Cardiac septum (tissue), 1 donor: ENCODE measurements at regions of chr16 and their contacts with region 1.

Region 1: DNA sequence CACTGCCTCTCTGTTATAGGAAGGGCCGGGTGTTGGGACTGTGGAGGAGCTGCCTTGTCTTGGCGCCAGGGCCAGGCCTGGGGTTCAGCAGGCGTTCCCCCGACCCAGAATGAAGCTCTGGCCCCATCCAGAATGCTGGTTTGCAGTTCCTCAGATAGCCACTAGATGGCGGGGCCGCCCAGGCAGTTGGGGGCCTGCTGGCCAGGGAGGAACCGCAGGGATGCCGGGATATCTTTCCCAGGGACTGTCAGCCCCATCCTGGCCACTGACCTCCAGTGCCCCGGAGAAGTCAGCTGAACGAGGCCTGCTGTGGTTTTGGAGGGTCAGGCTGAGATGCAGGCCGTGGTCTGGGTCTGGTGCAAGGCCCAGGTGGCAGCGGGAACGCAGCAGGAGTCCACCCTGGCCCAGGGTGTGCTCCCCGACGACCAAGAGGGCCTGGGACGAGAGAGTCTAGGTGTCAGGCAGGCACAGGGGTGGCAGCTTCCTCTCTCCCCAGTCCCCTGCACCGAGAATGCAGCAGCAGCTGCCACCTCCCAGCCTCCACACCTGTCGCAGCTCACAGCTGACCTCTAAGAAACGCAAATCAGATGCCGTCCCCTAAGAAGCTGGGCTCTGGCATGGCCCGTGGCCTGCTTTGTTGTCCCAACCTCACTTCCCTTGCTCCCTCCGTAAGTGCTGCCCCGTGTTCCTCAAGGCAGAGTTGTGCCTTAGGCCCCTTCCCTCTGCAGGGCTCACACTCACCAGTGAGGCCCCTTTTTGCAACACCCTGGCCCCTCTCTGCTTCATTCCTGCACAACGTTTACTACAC is 51.2 kb downstream of the RMI2 start:
- DNase-seq: peak; percentile 87

Region 2: GRCh38 chr16:11345040-11345862 is 51.2 kb before region 1 on chr16 and contains the start of gene RMI2:
- intact Hi-C with region 1: no loop called
- DNase-seq: peak; percentile 98
- total RNA-seq, gene RMI2: 0.43 TPM

Region 3: DNA sequence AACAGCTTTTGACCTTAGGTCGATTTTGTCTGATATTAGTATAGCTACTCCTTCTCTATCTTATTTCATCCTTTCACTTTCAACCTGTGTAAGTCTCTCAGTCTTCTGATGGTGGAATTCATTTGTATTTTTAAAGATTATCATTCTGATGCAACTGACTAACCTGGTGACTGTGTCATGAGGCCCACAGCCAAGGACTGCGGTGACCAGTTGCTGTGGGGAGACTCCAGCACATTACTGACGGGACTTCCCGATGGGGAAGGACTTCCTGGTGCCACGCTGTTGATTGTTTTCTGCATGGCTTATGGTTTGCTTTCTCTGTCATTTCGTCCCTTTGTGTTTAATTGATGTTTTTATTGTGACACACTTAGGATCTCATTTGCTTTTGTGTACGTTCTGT is 17.0 kb before region 1 on chr16:
- intact Hi-C with region 1: no loop called
- DNase-seq: peak; percentile 20

Region 4: DNA sequence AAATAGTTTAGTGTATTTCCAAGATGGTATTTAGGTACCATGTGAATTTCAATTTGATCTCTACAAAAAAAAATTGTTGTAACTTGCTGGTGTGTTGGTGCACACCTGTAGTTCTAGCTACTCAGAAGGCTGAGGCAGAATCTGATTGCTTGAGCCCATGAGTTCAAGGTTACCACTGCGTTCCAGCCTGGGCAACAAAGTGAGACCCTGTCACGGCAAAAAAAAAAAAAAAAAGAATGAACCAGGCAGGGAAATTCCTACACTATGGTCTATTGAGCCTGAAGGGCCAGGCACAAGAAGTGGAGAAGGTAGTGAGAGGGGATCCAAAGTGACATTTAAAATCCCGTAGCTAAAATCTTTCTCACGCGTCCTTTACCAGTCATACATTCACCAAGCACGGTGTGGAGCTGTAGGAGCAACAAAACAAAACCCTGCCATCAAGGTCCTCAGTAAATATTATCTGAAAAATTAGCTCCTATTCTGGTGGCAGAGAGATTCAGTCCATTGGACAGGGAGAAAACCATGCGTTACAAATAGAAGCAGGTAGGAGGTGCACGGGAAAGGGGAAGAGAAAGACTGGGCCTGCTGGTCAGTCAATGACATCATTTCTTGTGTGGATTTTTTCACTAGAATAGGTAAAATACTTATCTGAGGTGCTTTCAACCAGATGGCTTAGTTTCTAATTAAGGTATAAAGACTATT is 319.0 kb after region 1 on chr16:
- intact Hi-C with region 1: loop called (anchors 2 kb)
- DNase-seq: no peak

Region 5: GRCh38 chr16:11806721-11807120 is 410.3 kb after region 1 on chr16:
- intact Hi-C with region 1: loop called (anchors 5 kb)
- DNase-seq: no peak